Heart left ventricle (tissue), 16 donors: ENCODE measurements at regions of chr5 and their contacts with region 1.

Region 1: DNA sequence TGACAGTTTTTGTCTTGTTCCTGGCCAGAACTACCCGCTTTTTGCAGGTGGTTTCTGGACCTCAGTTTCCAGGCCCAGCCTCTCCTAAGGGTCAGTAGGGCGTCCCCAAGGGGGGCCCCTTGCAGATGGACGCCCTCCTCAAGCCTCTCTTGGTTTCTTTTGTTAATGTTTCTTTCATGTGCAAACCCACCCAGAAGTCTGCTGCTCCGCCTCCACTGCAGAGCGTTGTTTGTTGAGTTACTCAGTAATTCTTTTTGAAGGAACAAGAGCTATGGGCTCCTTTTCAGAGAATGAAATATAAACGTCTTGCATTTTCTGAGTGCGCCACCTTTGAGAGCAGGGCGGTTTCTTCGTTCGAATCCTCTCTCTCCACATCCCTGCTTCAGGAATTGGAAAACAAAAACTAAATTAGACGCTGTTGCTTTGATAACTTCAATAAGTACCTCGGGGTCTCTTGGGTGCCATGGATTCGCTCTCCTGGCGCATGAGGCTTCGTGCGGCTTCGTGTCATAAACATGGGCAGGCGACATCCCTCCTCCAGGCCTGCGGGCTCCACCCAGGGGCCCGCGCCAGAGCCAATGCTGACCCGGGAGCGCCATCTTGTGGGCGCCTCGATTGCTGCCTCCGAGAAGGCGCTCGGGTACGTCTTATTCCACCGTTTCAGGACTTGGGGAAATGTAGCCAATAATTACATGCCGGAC is 38.3 kb upstream of the CKMT2 start:
- DNase-seq: peak; percentile 75 to 90 (median 81)
- ATAC-seq: peak; percentile 85 to 96 (median 94)
- H3K4me3 ChIP-seq: peak overlapping the region in 2 of 12 donors; percentile 16 to 17
- H3K27ac ChIP-seq: peak overlapping the region in 1 of 12 donors; percentile 14
- H3K4me1 ChIP-seq: peaks cover 0 to 19% (median 7%) of the 10 kb centered on the region in 12 donors
- H3K27me3 ChIP-seq: no peaks in the 10 kb centered on the region
- CTCF ChIP-seq: peak; percentile 85 to 99 (median 94)
- POLR2A ChIP-seq: no peak

Region 2: DNA sequence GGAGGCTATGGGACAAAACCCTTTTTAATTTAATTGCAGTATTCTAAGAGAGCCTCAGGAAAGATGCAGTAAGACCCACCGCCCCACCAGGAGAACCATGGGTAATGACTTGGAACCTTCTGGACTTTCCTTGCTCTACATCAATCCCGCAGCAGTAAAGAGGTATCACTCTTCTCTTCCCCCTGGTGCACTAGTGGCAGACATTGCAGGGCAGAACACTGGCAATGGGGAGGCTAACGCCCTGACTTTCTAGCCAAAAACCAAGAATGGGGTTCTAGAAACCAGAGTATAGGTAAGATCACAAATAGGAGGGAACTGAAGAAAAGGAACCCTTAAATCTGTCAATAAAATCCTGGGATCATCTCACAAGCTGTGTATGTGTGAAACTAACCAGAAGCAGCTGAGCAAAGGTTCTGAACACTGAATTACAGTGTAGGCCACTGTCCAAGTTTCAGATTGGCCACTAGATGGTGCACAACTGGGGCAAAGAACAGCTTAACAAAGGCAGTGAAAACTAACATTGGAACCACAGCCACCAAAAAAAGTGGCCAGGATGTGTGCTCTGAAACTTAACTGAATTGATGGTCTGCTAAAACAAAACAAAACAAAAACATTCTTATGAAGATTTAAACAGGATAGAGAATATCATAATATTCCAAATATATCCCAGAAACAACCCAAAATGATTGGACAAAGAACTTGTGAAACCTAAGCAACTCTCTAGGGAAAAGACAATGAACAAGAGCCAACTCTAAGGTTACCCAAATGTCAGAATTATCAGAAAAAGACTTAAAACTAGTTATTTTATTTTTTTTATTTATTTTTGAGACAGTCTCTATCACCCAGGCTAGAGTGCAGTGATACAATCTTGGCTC is 713.5 kb before region 1 on chr5:
- intact Hi-C with region 1: loop called in 2 of 10 experiments (anchors 5 to 10 kb)
- DNase-seq: no peak
- ATAC-seq: peak in 3 of 4 donors; percentile 72 to 83 (median 81)
- H3K4me3 ChIP-seq: no peak overlapping the region
- H3K27ac ChIP-seq: no peak overlapping the region
- H3K4me1 ChIP-seq: no peaks in the 10 kb centered on the region
- H3K27me3 ChIP-seq: no peaks in the 10 kb centered on the region
- CTCF ChIP-seq: peak; percentile 35 to 65 (median 54)
- POLR2A ChIP-seq: no peak

Region 3: DNA sequence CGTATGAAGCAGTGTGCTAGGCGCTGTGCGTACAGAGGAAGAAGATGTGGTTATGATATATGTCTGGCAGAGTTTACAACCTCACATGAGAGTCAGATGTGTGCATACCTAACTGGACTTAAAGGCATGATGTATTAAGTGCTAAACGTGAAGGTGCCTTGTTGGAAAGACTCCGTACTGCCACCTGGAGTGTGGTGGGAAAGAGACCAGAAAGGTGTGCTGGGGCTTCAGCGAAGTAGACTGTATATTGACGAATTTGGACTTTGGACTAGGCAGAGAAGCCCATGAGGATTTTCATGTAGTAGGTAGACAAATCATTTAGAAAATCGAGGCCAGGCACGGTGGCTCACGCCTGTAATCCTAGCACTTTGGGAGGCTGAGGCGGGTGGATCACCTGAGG is 515.1 kb before region 1 on chr5:
- intact Hi-C with region 1: loop called in 6 of 10 experiments (anchors 5 to 10 kb)
- DNase-seq: no peak
- ATAC-seq: no peak
- H3K4me3 ChIP-seq: no peak overlapping the region
- H3K27ac ChIP-seq: no peak overlapping the region
- H3K4me1 ChIP-seq: no peaks in the 10 kb centered on the region
- H3K27me3 ChIP-seq: no peaks in the 10 kb centered on the region
- CTCF ChIP-seq: no peak
- POLR2A ChIP-seq: no peak

Region 4: DNA sequence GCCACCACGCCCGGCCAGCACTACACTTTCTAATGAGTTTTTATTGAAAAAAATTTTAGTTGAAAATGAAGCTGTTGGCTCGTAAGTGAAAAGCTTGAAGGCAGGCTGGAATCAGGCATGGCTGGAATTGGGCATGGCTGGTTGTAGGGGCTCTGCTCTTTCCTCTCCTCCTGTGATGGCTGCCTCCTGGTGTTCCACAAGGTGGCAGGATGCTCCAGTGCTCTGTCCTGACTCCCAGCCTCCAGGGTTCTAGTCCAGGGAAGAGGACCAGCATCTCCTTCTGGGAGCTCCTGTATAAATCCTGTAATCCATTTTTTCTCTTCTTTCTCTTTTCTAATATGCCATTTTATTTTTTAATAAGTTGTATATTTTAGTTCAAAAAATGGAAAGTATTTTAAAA is 482.8 kb before region 1 on chr5:
- intact Hi-C with region 1: loop called in 4 of 10 experiments (anchors 10 kb)
- DNase-seq: no peak
- ATAC-seq: no peak
- H3K4me3 ChIP-seq: no peak overlapping the region
- H3K27ac ChIP-seq: no peak overlapping the region
- H3K4me1 ChIP-seq: peaks cover 0 to 8% (median 0%) of the 10 kb centered on the region in 12 donors
- H3K27me3 ChIP-seq: no peaks in the 10 kb centered on the region
- CTCF ChIP-seq: peak in 7 of 12 donors; percentile 12 to 41 (median 25)
- POLR2A ChIP-seq: no peak

Region 5: GRCh38 chr5:80804332-80804731 is 390.5 kb before region 1 on chr5:
- intact Hi-C with region 1: loop called in 5 of 10 experiments (anchors 10 kb)
- DNase-seq: no peak
- ATAC-seq: no peak
- H3K4me3 ChIP-seq: no peak overlapping the region
- H3K27ac ChIP-seq: no peak overlapping the region
- H3K4me1 ChIP-seq: peaks cover 0 to 3% (median 0%) of the 10 kb centered on the region in 12 donors
- H3K27me3 ChIP-seq: no peaks in the 10 kb centered on the region
- CTCF ChIP-seq: peak in 5 of 12 donors; percentile 2 to 27 (median 20)
- POLR2A ChIP-seq: no peak

Region 6: DNA sequence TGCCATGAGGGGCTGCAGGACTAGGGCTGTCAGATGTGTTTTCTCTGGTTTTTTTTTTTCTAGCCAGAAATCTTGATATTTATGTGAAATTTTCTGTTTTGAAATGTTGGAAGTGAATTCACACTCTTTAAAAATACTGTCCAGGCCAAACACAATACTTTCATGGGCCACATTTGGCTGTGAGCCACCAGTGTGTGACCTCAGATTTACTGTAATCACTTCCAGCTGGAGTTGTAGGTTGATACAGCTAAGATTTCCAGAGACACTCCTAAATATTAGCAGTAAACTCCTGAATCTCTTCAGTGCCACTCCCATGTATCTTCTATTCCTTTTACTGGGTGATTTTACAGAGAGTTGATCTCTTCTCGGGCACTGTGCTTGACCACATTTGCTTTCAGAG is 53.8 kb before region 1 on chr5:
- intact Hi-C with region 1: no loop called
- DNase-seq: peak in 4 of 5 donors; percentile 38 to 65 (median 46)
- ATAC-seq: peak in 2 of 4 donors; percentile 70 to 71
- H3K4me3 ChIP-seq: no peak overlapping the region
- H3K27ac ChIP-seq: peak overlapping the region in 2 of 12 donors; percentile 8 to 19
- H3K4me1 ChIP-seq: peaks cover 0 to 26% (median 6%) of the 10 kb centered on the region in 12 donors
- H3K27me3 ChIP-seq: no peaks in the 10 kb centered on the region
- CTCF ChIP-seq: no peak
- POLR2A ChIP-seq: no peak

Region 7: GRCh38 chr5:81247441-81247972 is 52.7 kb after region 1 on chr5:
- intact Hi-C with region 1: no loop called
- DNase-seq: no peak
- ATAC-seq: no peak
- H3K4me3 ChIP-seq: no peak overlapping the region
- H3K27ac ChIP-seq: peak overlapping the region in 8 of 12 donors; percentile 2 to 95 (median 25)
- H3K4me1 ChIP-seq: peaks cover 5 to 98% (median 62%) of the 10 kb centered on the region in 12 donors
- H3K27me3 ChIP-seq: no peaks in the 10 kb centered on the region
- CTCF ChIP-seq: no peak
- POLR2A ChIP-seq: no peak

Region 8: DNA sequence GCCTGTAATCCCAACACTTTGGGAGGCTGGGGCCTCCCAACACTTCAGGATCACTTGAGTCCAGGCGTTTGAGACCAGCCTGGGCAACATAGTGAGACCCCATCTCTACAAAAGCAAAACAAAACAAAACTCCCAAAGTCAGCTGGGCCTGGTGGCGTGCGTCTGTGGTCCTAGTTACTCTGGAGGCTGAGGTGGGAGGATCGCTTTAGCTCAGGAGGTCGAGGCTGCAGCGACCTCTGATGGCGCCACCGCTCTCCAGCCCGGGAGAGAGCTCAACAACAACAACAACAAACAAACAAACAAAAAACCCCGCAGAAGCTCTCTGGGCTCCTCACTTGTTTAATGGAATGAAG is 198.6 kb after region 1 on chr5:
- intact Hi-C with region 1: no loop called
- DNase-seq: no peak
- ATAC-seq: no peak
- H3K4me3 ChIP-seq: peak overlapping the region; percentile 15 to 56 (median 44)
- H3K27ac ChIP-seq: no peak overlapping the region
- H3K4me1 ChIP-seq: peaks cover 0 to 18% (median 0%) of the 10 kb centered on the region in 12 donors
- H3K27me3 ChIP-seq: peaks cover 0 to 51% (median 11%) of the 10 kb centered on the region in 9 donors
- CTCF ChIP-seq: no peak
- POLR2A ChIP-seq: no peak